PC-3 (cell line): ENCODE measurements at regions of chr7 and their contacts with region 1.

Region 1: DNA sequence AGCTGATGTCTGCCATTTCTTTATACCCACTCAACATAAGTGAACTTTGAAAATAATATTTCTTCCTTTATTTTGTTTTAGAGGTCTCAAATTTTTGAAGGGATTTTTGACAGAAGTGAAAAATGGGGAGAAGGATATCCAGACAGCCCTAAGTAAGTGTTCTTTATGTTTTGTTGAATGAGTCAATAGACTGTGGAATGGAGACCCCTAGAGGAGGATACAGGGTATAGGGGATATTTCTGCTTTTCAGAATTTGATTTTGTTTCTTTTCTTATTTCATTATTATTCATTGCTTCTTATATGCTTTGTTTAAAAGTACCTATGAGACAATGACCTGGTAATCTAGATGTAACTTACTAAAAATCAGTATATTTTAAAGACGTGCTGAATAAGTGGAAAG is 34.4 kb downstream of the PLEKHA8 start:
- DNase-seq: peak; percentile 42
- ATAC-seq: peak; percentile 63
- H3K4me3 ChIP-seq: no peak overlapping the region
- H3K27ac ChIP-seq: no peak overlapping the region
- H3K4me1 ChIP-seq: no peaks in the 10 kb centered on the region
- H3K27me3 ChIP-seq: no peaks in the 10 kb centered on the region
- CTCF ChIP-seq: peak; percentile 81

Region 2: GRCh38 chr7:28926871-28927597 is 1135.6 kb before region 1 on chr7:
- CTCF ChIA-PET with region 1: no interaction called
- POLR2A ChIA-PET with region 1: no interaction called
- intact Hi-C with region 1: loop called (anchors 10 kb)
- DNase-seq: peak; percentile 96
- ATAC-seq: peak; percentile 96
- H3K4me3 ChIP-seq: peak overlapping the region; percentile 75
- H3K27ac ChIP-seq: no peak overlapping the region
- H3K4me1 ChIP-seq: peaks cover 5% of the 10 kb centered on the region; the same call in 1 of the 2 replicates
- H3K27me3 ChIP-seq: no peaks in the 10 kb centered on the region
- CTCF ChIP-seq: peak; percentile 87

Region 3: DNA sequence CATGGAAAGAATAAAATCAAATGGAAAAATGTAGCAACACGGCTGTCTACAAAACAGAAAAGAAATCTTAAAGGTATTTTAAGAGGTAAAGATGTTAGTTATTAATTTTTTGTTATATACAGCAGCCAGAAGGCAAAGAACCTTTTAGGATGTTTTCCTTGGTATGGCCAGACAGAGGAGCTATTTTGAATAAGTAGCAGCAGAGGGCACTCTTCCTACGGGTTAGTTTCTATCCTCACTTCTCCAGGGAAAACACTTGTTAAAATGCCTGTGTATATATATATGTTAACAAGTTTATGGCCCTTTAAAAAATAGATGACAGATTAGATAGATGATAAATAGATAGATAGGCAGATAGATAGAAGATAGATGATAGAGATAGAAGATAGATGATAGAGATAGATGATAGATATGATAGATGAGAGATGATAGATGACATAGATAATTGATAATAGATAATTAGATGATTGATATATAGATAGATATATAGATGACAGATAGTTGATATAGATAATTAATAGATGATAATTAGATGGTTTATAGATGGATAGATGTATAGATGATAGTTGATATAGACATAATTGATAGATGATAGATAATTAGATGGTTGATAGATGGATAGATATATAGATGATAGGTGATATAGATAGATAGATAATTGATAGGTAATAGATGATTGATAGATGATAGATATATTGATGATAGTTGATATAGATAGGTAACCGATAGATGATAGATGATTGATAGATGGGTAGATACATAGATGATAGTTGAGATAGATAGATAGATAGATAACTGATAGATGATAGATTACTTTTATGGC is 314.1 kb before region 1 on chr7:
- CTCF ChIA-PET with region 1: interaction called, 4 read pairs
- POLR2A ChIA-PET with region 1: no interaction called
- intact Hi-C with region 1: loop called (anchors 1 kb)
- DNase-seq: peak; percentile 73
- ATAC-seq: peak; percentile 66
- H3K4me3 ChIP-seq: 0 out of 2 replicates have a peak overlapping the region, but pooled peaks have one; percentile 27
- H3K27ac ChIP-seq: peak overlapping the region; percentile 37; the same call in 1 of the 2 replicates
- H3K4me1 ChIP-seq: peaks cover 9% of the 10 kb centered on the region
- H3K27me3 ChIP-seq: no peaks in the 10 kb centered on the region
- CTCF ChIP-seq: peak; percentile 73

Region 4: GRCh38 chr7:29878081-29878688 is 184.4 kb before region 1 on chr7:
- CTCF ChIA-PET with region 1: interaction called, 9 read pairs
- POLR2A ChIA-PET with region 1: no interaction called
- intact Hi-C with region 1: loop called (anchors 1 kb)
- DNase-seq: peak; percentile 76
- ATAC-seq: peak; percentile 74
- H3K4me3 ChIP-seq: no peak overlapping the region
- H3K27ac ChIP-seq: no peak overlapping the region
- H3K4me1 ChIP-seq: peaks cover under 1% of the 10 kb centered on the region
- H3K27me3 ChIP-seq: no peaks in the 10 kb centered on the region
- CTCF ChIP-seq: peak; percentile 83

Region 5: DNA sequence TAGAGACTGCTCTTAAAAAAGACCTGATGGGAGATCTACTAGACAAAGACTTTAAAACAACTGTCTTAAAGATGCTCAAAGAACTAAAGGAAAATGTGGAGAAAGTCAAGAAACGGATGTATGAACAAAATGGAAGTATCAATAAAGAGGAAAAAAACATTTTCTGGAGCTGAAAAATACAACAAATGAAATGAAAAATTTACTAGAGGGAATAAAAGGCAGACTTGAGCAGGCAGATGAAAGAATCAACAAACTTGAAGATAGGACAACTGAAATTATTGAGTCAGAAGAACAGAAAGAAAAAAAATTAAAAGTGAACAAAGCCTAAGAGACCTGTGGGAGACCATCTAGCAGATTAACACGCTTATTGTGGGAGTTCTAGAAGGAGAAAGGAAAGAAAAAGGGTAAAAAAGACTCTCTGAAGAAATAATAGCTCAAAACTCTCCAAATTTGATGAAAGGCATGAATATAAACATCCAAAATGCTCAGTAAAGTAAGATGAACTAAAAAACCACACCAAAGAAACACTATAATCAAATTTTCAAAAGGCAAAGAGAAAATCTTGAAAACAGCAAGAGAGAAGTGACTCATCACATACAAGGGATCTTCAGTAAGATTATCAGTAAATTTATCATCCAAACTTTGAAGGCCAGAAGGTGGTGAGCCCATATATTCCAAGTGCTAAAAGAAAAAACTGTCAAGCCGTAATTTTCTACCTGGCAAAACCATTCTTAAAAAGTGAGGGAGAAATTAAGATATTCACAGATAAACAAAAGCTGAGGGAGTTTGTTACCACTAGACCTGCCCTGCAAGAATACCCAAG is 156.2 kb before region 1 on chr7:
- CTCF ChIA-PET with region 1: no interaction called
- POLR2A ChIA-PET with region 1: no interaction called
- intact Hi-C with region 1: no loop called
- DNase-seq: no peak
- ATAC-seq: no peak
- H3K4me3 ChIP-seq: no peak overlapping the region
- H3K27ac ChIP-seq: no peak overlapping the region
- H3K4me1 ChIP-seq: no peaks in the 10 kb centered on the region
- H3K27me3 ChIP-seq: no peaks in the 10 kb centered on the region
- CTCF ChIP-seq: no peak

Region 6: DNA sequence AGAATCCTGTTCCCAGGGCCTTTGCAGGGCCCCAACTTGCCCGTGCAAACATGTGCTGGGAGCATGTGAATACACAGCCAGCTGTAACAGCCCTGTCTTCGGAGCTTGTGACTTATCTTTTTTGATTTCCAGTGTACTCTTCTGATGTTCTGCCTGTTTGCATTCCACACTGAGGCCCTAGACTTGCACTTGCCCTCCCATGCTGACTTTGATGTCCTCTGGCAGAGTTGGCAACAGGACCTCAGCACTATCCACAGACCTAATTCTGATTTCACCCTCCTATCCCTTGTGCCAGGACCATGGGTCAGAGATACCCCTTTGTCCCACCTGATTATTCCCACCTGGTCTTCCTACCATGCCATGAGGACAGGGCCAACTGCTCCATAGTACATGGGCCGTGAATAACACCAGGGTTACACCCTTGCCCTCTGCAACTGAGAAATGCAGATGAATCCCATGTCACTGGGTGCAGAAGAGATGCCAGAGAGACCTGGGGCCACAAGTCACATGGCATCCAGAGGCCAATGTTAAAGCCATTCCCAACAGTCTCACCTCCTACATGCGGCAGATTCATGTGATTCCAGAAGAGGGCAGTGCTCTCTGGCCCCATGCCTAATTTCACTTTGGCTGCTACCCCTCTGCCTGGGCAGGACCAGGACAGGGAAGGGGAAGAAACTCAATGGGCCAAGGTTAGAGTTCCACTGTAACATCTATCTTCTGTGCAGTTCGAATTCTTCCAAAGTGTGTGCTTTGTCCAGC is 116.0 kb before region 1 on chr7:
- CTCF ChIA-PET with region 1: no interaction called
- POLR2A ChIA-PET with region 1: no interaction called
- intact Hi-C with region 1: loop called (anchors 1 kb)
- DNase-seq: peak; percentile 52
- ATAC-seq: peak; percentile 56; the same call in 1 of the 2 replicates
- H3K4me3 ChIP-seq: no peak overlapping the region
- H3K27ac ChIP-seq: no peak overlapping the region
- H3K4me1 ChIP-seq: no peaks in the 10 kb centered on the region
- H3K27me3 ChIP-seq: no peaks in the 10 kb centered on the region
- CTCF ChIP-seq: peak; percentile 63

Region 7: GRCh38 chr7:30012757-30013156 is 49.8 kb before region 1 on chr7:
- CTCF ChIA-PET with region 1: no interaction called
- POLR2A ChIA-PET with region 1: no interaction called
- intact Hi-C with region 1: loop called (anchors 2 kb)
- DNase-seq: peak; percentile 72
- ATAC-seq: peak; percentile 63
- H3K4me3 ChIP-seq: no peak overlapping the region
- H3K27ac ChIP-seq: no peak overlapping the region
- H3K4me1 ChIP-seq: peaks cover 6% of the 10 kb centered on the region; the same call in 1 of the 2 replicates
- H3K27me3 ChIP-seq: no peaks in the 10 kb centered on the region
- CTCF ChIP-seq: peak; percentile 45; the same call in 1 of the 2 replicates

Region 8: DNA sequence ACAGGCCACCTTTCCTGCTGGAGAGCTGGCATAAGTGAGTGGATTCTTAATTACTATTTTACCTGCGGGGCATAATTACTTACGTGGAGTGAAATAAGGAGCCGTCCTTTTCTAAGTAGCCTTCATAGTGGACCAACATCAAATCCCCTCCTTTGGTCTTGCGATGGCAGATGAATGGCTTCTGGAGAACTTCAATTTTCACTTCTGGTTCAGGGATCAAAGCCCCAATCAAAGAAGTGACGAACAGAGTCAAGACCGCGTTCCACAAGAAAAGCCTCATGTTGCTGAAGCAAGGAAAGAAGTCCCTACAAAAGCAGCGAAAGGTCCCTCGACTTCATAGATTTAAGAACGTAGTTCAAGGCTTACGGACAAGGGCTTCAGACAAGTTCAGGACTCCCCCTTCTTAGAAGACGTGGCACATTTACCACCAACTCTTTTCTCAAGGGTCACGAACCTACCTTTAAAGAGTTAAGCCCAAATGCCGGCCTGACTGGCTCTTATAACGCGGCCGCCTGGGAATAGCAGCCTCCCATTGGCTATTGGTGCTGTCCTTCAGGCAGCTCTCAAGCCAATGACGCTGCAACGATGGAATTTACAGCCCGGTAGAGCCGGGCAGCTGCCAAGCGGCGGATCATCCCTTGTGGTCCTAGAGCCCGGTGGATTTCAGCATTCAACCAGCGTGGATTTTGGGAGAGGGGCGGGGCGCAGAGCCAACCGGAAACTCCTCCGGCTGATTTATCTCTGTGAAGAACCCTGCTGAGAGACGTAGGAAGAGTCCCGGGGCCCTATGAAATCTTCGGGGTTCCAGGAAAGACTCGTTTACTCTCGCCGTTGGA is 36.1 kb before region 1 on chr7 and contains the start of gene FKBP14:
- CTCF ChIA-PET with region 1: interaction called, 5 read pairs
- POLR2A ChIA-PET with region 1: no interaction called
- intact Hi-C with region 1: loop called (anchors 1 kb)
- DNase-seq: peak; percentile 98
- ATAC-seq: peak; percentile 83
- H3K4me3 ChIP-seq: peak within 1 kb of the TSS; percentile 84
- H3K27ac ChIP-seq: peak within 1 kb of the TSS; percentile 64
- H3K4me1 ChIP-seq: peaks cover 20% of the 10 kb centered on the region; the same call in 1 of the 2 replicates
- H3K27me3 ChIP-seq: no peaks in the 10 kb centered on the region
- CTCF ChIP-seq: no peak
- total RNA-seq, gene FKBP14: 9.0 and 10.1 TPM in 2 replicates